ENCODE measurements at regions of chr5 and their contacts with region 1.

Region 1: GRCh38 chr5:163564321-163564938 is 59.0 kb downstream of the MAT2B start:
- DNase-seq: peak; percentile 43
- H3K4me3 Mint-ChIP-seq: no peak overlapping the region
- H3K27ac Mint-ChIP-seq: no peak overlapping the region
- H3K4me1 Mint-ChIP-seq: peaks cover 29% of the 10 kb centered on the region
- H3K27me3 Mint-ChIP-seq: peaks cover 54% of the 10 kb centered on the region

Region 2: GRCh38 chr5:163437309-163438182 is 126.9 kb before region 1 on chr5 and contains the start of gene CCNG1:
- intact Hi-C with region 1: loop called (anchors 5 kb)
- DNase-seq: peak; percentile 87
- H3K4me3 Mint-ChIP-seq: peak within 1 kb of the TSS; percentile 92
- H3K27ac Mint-ChIP-seq: peak within 1 kb of the TSS; percentile 75
- H3K4me1 Mint-ChIP-seq: peaks cover 59% of the 10 kb centered on the region
- H3K27me3 Mint-ChIP-seq: peaks cover 6% of the 10 kb centered on the region
- total RNA-seq, gene CCNG1: 72.3 and 77.8 TPM in 2 replicates

Region 3: GRCh38 chr5:163677084-163677483 is 112.7 kb after region 1 on chr5:
- intact Hi-C with region 1: no loop called
- DNase-seq: no peak
- H3K4me3 Mint-ChIP-seq: no peak overlapping the region
- H3K27ac Mint-ChIP-seq: no peak overlapping the region
- H3K4me1 Mint-ChIP-seq: no peaks in the 10 kb centered on the region
- H3K27me3 Mint-ChIP-seq: no peaks in the 10 kb centered on the region

Region 4: GRCh38 chr5:164013077-164013670 is 448.7 kb after region 1 on chr5:
- intact Hi-C with region 1: loop called (anchors 1 kb)
- DNase-seq: no peak
- H3K4me3 Mint-ChIP-seq: no peak overlapping the region
- H3K27ac Mint-ChIP-seq: no peak overlapping the region
- H3K4me1 Mint-ChIP-seq: no peaks in the 10 kb centered on the region
- H3K27me3 Mint-ChIP-seq: no peaks in the 10 kb centered on the region

Region 5: GRCh38 chr5:164504141-164504772 is 939.8 kb after region 1 on chr5:
- intact Hi-C with region 1: loop called (anchors 1 kb)
- DNase-seq: no peak
- H3K4me3 Mint-ChIP-seq: no peak overlapping the region
- H3K27ac Mint-ChIP-seq: no peak overlapping the region
- H3K4me1 Mint-ChIP-seq: no peaks in the 10 kb centered on the region
- H3K27me3 Mint-ChIP-seq: no peaks in the 10 kb centered on the region

Region 6: DNA sequence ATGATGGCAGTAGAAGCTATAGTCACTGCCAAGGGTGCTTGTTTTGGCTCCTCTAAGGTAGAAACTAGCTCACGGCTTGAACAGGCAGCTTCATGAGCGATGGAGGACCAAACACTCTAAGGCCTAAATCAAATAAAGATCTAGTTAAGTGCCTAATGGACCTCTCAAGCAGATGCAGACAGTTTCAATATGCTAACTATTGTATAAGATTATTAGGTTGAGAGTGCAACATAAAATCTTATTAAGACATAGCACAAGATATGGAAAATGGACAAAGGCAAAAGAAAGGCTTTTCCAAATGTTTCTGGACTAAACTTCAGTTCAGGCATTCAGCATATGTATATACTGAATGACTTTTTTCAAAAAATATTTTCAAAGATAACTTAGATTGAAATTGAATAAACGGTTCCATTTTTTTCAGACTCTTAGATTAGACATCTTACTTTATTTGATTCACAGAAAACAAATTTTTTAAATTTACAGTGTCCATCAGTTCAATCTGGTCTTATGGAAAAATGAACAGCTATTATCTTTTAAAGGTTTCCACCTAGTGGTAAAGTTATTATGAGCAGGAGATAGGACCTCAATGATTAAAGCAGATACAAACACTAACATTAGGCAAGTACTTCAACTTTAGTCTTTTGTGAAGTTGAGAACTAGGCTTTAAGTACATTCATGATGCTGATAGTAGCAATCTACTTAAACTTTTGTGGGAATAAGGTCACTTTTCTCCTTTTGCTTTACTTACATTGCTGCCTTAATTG is 1108.7 kb after region 1 on chr5:
- intact Hi-C with region 1: loop called (anchors 10 kb)
- DNase-seq: no peak
- H3K4me3 Mint-ChIP-seq: no peak overlapping the region
- H3K27ac Mint-ChIP-seq: no peak overlapping the region
- H3K4me1 Mint-ChIP-seq: no peaks in the 10 kb centered on the region
- H3K27me3 Mint-ChIP-seq: no peaks in the 10 kb centered on the region

Region 7: DNA sequence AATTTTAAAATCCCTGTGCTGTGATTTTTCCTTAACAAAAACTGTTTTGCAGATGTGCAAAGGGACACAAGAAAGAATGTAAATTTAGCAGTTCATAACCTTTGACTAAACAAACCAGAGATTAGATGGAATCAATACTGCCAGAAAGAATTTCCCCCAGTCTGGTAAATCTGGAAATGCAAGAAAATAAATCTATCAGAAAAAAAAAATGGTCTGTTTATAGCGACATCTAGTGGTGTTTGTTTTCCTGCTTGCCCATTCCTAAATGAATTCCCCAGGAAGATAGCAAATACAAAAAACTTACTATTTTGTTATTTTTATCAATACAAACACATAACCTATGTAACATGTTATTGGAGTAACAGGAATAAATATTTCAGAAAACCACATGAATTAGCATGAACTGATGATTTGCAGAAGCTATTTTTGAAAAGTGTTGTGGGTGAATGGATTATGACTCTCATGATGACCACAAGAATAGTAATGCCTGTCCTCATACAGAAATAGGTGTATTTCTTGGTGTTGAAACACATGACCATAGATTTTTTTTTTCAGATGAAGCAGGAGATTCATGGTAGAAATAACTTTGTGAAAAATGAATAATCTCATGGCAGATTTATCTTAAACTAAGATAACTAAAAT is 1644.8 kb after region 1 on chr5:
- intact Hi-C with region 1: loop called (anchors 1 kb)
- DNase-seq: no peak
- H3K4me3 Mint-ChIP-seq: no peak overlapping the region
- H3K27ac Mint-ChIP-seq: no peak overlapping the region
- H3K4me1 Mint-ChIP-seq: no peaks in the 10 kb centered on the region
- H3K27me3 Mint-ChIP-seq: peaks cover 3% of the 10 kb centered on the region

Region 8: DNA sequence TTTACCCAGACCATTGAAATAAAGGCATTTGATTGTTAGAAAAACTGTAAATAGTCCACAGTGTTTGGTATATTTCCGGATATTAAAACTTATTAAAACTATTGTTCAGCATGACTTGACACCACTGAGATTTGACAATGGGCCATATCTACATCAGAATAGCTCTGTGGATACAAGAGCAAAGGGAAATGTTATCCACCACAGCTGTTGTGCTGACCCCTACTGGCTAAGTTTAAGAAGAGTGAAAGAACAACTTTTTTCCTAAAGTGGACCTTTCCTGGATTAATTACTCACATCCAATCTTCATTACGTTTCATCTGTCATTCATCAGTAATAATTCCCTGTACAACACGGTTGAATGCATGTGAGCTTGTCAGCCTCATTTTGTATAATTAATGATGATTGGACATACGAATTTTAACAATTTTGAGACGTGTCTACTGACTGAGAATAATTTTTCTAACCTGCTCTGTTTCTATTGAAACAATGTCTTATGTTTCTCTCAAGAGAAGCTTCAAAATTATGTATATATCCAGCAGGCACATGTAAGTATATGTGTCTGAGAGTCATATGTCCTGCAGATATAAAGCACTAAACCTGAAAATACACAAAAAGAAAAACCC is 1893.5 kb after region 1 on chr5:
- intact Hi-C with region 1: loop called (anchors 5 kb)
- DNase-seq: no peak
- H3K4me3 Mint-ChIP-seq: no peak overlapping the region
- H3K27ac Mint-ChIP-seq: no peak overlapping the region
- H3K4me1 Mint-ChIP-seq: no peaks in the 10 kb centered on the region
- H3K27me3 Mint-ChIP-seq: no peaks in the 10 kb centered on the region